ENCODE measurements at regions of chr14 and their contacts with region 1.

Region 1: GRCh38 chr14:56579345-56580220 is at the start of gene TMEM260:
- DNase-seq: peak; percentile 82 to 91 (median 90)
- ATAC-seq: peak; percentile 98
- H3K4me3 ChIP-seq: peak within 1 kb of the TSS; percentile 94 to 100
- H3K27ac ChIP-seq: peak within 1 kb of the TSS; percentile 78 to 92 (median 86)
- H3K4me1 ChIP-seq: peaks cover 32% of the 10 kb centered on the region
- H3K27me3 ChIP-seq: no peaks in the 10 kb centered on the region
- CTCF ChIP-seq: peak; percentile 83 to 95 (median 92)
- POLR2A ChIP-seq: peak; percentile 69 to 91 (median 87)
- total RNA-seq, gene TMEM260: 15.8 to 18.4 TPM

Region 2: GRCh38 chr14:56524971-56525677 is 54.5 kb before region 1 on chr14:
- intact Hi-C with region 1: no loop called
- DNase-seq: no peak
- ATAC-seq: no peak
- H3K4me3 ChIP-seq: no peak overlapping the region
- H3K27ac ChIP-seq: no peak overlapping the region
- H3K4me1 ChIP-seq: no peaks in the 10 kb centered on the region
- H3K27me3 ChIP-seq: no peaks in the 10 kb centered on the region
- CTCF ChIP-seq: no peak
- POLR2A ChIP-seq: no peak

Region 3: DNA sequence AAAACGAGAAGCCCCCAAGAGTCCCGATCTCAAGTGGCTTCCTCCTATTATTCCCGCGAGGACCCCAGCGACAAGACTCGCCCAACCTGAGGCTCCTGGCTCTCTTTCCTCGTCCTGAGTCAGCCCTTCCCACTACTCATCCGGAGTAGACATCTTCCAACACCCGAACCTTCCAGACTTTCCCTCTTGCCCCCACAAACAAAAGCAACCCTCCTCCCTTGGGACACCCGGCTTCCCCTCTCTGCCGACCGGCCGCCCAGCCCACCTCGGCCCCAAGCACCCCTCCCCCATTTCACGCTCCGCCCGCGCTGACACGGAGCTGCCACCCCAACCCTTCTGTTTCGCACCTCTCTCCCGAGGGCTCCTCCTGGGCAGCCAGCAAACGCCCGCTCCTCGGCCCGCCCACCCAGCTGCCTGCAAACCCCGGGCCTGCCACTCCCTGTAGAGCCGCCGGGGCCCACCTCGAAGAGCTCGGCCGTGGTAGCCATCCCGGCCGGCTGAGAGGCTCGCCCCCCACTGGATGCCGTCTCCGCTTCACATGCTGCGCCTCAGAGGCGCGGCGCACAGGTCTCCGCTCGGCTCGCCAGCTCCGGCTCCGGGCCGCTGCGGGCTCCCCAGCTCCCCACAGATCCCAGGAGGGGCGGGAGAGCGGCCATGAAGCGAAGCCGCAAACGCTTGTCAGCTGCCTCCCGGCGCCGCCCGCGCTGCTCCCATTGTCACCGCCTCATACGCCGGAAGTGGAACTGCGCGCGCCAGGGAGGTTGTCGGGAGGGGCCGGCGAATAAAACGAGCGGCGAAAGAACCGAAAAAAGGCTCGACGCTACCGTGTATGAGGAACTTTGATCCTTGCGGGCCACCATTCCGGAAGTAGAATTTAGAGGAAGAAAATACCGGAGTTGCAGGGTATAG is 688.8 kb after region 1 on chr14 and contains the starts of genes AP5M1 and EXOC5:
- intact Hi-C with region 1: loop called (anchors 10 kb)
- DNase-seq: peak; percentile 89 to 95 (median 92)
- ATAC-seq: peak; percentile 96
- H3K4me3 ChIP-seq: peak within 1 kb of the TSS; percentile 91
- H3K27ac ChIP-seq: peak within 1 kb of the TSS; percentile 82 to 97 (median 88)
- H3K4me1 ChIP-seq: peaks cover 45% of the 10 kb centered on the region
- H3K27me3 ChIP-seq: no peaks in the 10 kb centered on the region
- CTCF ChIP-seq: peak in 3 of 7 experiments; percentile 5 to 19 (median 18)
- POLR2A ChIP-seq: peak; percentile 62 to 78 (median 77)
- total RNA-seq, gene AP5M1: 12.2 to 17.8 TPM
- total RNA-seq, gene EXOC5: 16.3 to 19.4 TPM

Measured in body of pancreas (tissue), 4 donors.